K562 (cell line): ENCODE measurements at regions of chr18 and their contacts with region 1.

Region 1: DNA sequence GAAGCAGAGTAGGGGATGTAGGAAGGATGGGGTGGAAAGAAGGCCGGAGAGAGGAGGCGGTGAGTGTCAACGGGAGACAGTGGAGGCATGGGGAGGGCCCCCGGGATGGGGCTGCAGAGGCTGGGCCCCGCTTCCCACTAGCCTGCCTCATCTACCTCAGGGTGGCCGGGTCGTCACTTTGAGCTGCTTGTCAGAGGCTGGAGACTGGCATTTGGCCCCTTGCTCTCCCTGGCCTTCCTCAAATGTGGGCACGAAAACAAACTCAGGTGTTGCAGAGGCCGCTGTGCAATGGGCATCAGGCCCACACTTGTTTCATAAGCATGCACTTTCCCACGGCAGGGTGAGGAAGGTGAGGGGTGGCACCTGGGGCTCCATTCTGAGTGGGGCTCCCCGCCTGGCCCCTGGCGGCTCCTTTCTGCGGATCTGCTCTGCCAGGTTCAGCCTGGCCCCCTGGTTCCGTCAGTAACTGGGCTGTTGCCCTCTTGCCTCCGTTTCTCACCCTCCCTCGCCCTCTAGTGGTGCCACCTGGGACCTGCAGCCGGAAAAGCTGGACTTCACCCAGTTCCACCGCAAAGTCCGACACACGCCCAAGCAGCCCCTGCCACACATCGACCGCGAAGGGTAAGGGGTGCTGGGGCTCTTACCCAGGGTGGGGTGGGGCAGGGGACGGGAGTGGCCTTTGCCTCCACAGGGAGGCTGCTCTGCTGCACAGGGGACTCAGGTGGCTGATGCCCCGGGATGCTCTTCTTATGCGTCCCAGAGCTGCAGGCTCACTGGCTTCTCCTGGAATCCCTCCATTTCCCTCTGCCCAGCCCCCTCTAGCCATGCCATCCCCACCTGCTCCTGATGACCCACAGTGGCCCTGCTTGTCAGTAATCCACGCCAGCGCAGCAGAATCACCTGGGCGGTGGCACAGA is 125.4 kb downstream of the CTIF start:
- DNase-seq: peak; percentile 51 to 72 (median 67)
- ATAC-seq: peak; percentile 72
- H3K4me3 ChIP-seq: no peak overlapping the region
- H3K27ac ChIP-seq: no peak overlapping the region
- H3K4me1 ChIP-seq: peaks cover 0 to 13% of the 10 kb centered on the region in 2 experiments; a peak in 3 of 5 replicates
- H3K27me3 ChIP-seq: no peaks in the 10 kb centered on the region
- CTCF ChIP-seq: peak; percentile 65 to 71 (median 68)
- EP300 ChIP-seq: no peak
- POLR2A ChIP-seq: no peak
- RAD21 ChIP-seq: peak; percentile 31 to 74; a peak in 3 of 4 replicates

Region 2: GRCh38 chr18:48475635-48476549 is 188.3 kb before region 1 on chr18:
- CTCF ChIA-PET with region 1: interaction called, 13 read pairs
- POLR2A ChIA-PET with region 1: interaction called, 3 read pairs
- in situ Hi-C with region 1: loop called (anchors 5 kb)
- intact Hi-C with region 1: loop called (anchors 1 kb)
- DNase-seq: peak; percentile 37 to 64 (median 50)
- ATAC-seq: peak; percentile 94
- H3K4me3 ChIP-seq: no peak overlapping the region
- H3K27ac ChIP-seq: no peak overlapping the region
- H3K4me1 ChIP-seq: no peaks in the 10 kb centered on the region; a peak in 1 of 5 replicates
- H3K27me3 ChIP-seq: peaks cover 0 to 7% of the 10 kb centered on the region in 2 experiments; a peak in 2 of 5 replicates
- CTCF ChIP-seq: peak; percentile 71 to 87 (median 75)
- EP300 ChIP-seq: no peak
- POLR2A ChIP-seq: no peak
- RAD21 ChIP-seq: peak; percentile 85 to 89

Region 3: DNA sequence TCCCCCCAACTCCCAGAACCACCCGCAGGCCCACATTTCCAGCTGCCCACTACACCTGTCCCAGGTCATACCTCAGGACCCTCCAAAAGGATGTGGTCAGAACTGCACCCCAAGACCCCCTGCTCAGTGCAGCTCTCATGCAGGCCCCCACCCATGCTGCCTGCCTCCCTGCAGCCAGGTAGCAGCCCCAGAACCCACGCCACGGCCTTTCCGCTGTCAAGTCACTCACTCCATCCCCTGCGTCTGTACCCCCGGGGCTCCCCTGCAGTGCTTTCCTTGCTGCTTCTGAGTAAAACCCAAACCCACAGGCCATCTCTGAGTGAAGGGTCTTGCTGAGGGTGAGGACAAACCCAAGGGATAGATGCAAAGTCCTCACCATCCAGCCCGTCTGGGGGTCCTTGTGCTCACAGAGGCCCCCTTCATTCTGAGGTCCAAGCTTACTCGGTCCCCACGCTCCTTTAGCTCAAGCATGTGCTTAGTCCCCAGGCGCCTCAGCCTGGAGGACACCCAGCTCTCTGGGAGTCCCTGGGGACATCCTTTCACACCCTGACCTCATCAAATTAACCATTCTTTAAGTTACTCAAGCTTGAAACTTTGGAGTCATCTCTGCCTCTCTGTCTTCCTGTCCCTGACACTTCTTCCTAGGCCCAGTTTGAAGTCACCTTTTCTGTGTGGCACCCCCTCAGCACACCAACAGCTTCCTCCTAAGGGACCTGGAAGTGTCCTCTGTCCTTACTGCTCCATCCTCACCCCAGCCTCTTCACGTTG is 156.5 kb after region 1 on chr18:
- CTCF ChIA-PET with region 1: no interaction called
- POLR2A ChIA-PET with region 1: no interaction called
- in situ Hi-C with region 1: no loop called
- intact Hi-C with region 1: no loop called
- DNase-seq: no peak
- ATAC-seq: no peak
- H3K4me3 ChIP-seq: no peak overlapping the region
- H3K27ac ChIP-seq: no peak overlapping the region
- H3K4me1 ChIP-seq: no peaks in the 10 kb centered on the region; a peak in 1 of 5 replicates
- H3K27me3 ChIP-seq: no peaks in the 10 kb centered on the region
- CTCF ChIP-seq: no peak
- EP300 ChIP-seq: no peak
- POLR2A ChIP-seq: no peak
- RAD21 ChIP-seq: no peak